SK-N-SH (cell line): ENCODE measurements at regions of chr17 and their contacts with region 1.

Region 1: DNA sequence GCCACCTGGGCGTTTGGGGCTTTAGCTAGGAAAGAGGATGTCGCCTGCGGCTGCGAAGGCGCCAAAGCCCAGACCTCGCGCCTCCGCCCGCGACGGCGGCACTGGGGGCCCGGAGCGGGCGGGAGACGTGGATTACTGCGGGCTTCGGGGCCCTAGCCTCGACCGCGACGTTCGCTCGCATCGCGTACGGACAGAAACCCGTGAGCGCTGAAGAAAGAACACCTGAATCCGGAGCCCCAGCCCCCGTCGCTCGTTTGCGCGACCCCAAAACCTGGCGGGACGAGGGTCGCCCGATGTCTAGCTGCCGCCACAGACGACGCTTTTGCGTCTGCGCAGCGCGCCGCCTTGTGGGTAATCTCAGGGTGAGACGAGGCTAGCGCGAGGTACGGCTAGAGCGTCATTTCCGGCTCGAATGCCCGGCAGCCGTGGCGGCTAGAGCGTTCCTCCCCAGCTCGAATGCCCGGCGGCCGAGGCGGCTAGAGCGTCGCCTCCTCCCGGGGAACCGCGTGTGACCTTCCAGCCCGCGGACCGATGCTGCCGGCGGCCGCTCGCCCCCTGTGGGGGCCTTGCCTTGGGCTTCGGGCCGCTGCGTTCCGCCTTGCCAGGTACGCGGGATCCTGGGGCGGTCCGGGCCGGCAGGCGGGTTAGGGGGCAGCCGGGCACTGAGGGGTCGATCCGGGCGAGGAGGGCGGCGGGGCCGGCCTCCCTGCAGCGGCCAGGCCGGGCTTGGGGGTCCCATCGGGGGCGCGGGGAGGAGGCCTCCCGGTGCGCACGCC is at the start of gene MRPL12:
- DNase-seq: peak; percentile 100
- H3K4me3 ChIP-seq: peak within 1 kb of the TSS; percentile 86 to 95
- H3K27ac ChIP-seq: peak within 1 kb of the TSS; percentile 78 to 84
- H3K4me1 ChIP-seq: peaks cover 14 to 29% of the 10 kb centered on the region in 2 experiments; a peak in 3 of 4 replicates
- H3K27me3 ChIP-seq: no peaks in the 10 kb centered on the region
- CTCF ChIP-seq: no peak
- EP300 ChIP-seq: no peak
- RAD21 ChIP-seq: no peak
- polyA plus RNA-seq, gene MRPL12: 255 and 322 TPM in 2 replicates

Region 2: GRCh38 chr17:81676906-81677305 is 26.3 kb before region 1 on chr17:
- CTCF ChIA-PET with region 1: interaction called, 17 read pairs
- POLR2A ChIA-PET with region 1: interaction called, 3 read pairs
- DNase-seq: peak; percentile 30
- H3K4me3 ChIP-seq: no peak overlapping the region
- H3K27ac ChIP-seq: no peak overlapping the region
- H3K4me1 ChIP-seq: peaks cover 0 to 1% of the 10 kb centered on the region in 2 experiments; a peak in 2 of 4 replicates
- H3K27me3 ChIP-seq: no peaks in the 10 kb centered on the region
- CTCF ChIP-seq: no peak
- EP300 ChIP-seq: no peak
- RAD21 ChIP-seq: no peak

Region 3: DNA sequence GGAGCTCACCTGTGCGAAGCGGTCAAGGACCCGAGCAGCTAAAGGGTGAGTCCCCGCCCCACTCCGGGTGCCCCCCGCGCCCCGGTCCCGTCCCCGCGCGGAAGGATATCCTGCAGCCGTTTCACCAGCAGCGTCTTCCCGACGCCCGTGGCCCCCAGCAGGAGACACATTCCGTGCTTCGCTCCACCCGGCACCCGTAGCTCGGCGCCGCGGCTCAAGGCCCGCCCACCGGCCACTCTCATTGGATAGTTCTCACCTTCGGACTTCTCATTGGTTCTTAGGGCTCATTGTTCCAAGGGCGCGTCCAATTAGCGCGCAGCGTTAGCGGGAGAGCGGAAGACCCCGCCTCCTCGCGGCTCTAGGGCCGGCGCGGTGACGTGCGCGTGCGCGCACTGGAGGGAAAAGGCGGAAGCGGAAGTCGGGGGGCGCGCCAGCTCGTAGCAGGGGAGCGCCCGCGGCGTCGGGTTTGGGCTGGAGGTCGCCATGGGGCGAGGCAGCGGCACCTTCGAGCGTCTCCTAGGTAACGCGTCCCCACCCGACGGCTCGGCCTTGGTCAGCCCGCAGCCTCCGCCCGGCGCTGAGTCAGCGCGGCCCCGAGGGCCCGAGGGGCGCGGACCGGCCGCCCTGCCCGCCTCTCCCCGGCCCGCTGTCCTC is 19.4 kb before region 1 on chr17 and contains the starts of genes ARL16 and HGS:
- CTCF ChIA-PET with region 1: interaction called, 5 read pairs
- POLR2A ChIA-PET with region 1: interaction called, 33 read pairs
- DNase-seq: peak; percentile 100
- H3K4me3 ChIP-seq: peak within 1 kb of the TSS; percentile 94 to 99
- H3K27ac ChIP-seq: peak within 1 kb of the TSS; percentile 82 to 91
- H3K4me1 ChIP-seq: peaks cover 19 to 21% of the 10 kb centered on the region in 2 experiments; a peak in 3 of 4 replicates
- H3K27me3 ChIP-seq: no peaks in the 10 kb centered on the region
- CTCF ChIP-seq: no peak
- EP300 ChIP-seq: peak in 1 of 2 experiments; percentile 9; a peak in 1 of 4 replicates
- RAD21 ChIP-seq: no peak
- polyA plus RNA-seq, gene ARL16: 148 and 166 TPM in 2 replicates
- polyA plus RNA-seq, gene HGS: 184 and 192 TPM in 2 replicates

Region 4: DNA sequence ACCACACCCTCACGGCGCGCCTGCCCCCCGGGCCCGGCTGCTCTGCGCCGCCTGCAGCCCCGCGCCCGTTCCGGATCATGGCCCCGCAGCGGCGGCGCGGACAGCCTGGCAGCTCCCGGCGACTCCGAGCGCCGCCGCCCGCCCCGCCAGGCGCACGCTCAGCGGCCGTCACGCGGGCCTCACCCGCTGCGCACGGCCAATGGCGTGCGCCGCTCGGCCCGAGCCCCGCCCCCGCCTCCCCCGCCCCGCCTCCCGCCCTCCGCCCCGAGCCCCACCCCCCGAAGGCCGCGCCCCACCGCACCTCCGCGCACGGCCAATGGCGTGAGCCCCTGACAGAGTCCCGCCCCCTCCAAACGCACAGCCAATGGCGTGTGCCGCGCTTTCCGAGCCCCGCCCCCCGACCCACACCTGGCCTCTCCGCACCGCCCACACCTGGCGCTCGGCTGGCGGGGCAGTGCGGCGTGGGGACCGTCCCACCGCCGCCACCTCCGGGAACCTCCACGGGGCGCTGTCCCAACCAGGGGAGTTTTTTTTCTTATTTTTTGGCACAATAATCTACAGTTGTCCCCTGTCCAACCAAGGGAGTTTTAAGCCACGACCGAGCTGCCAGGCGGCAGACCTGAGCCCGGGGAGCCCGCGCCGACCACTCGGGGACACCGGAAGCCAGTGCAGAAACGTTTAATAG is 208.3 kb after region 1 on chr17 and contains the start of gene PCYT2:
- CTCF ChIA-PET with region 1: no interaction called
- POLR2A ChIA-PET with region 1: no interaction called
- DNase-seq: peak; percentile 100
- H3K4me3 ChIP-seq: peak within 1 kb of the TSS; percentile 85 to 96
- H3K27ac ChIP-seq: peak within 1 kb of the TSS in 1 of 2 experiments; percentile 44; a peak in 2 of 4 replicates
- H3K4me1 ChIP-seq: peaks cover 8 to 19% of the 10 kb centered on the region in 2 experiments; a peak in 2 of 4 replicates
- H3K27me3 ChIP-seq: no peaks in the 10 kb centered on the region
- CTCF ChIP-seq: peak; percentile 10; the same call in 1 of the 2 replicates
- EP300 ChIP-seq: no peak
- RAD21 ChIP-seq: no peak
- polyA plus RNA-seq, gene PCYT2: 46.2 and 54.1 TPM in 2 replicates